ENCODE measurements at regions of chr11 and their contacts with region 1.

Region 1: DNA sequence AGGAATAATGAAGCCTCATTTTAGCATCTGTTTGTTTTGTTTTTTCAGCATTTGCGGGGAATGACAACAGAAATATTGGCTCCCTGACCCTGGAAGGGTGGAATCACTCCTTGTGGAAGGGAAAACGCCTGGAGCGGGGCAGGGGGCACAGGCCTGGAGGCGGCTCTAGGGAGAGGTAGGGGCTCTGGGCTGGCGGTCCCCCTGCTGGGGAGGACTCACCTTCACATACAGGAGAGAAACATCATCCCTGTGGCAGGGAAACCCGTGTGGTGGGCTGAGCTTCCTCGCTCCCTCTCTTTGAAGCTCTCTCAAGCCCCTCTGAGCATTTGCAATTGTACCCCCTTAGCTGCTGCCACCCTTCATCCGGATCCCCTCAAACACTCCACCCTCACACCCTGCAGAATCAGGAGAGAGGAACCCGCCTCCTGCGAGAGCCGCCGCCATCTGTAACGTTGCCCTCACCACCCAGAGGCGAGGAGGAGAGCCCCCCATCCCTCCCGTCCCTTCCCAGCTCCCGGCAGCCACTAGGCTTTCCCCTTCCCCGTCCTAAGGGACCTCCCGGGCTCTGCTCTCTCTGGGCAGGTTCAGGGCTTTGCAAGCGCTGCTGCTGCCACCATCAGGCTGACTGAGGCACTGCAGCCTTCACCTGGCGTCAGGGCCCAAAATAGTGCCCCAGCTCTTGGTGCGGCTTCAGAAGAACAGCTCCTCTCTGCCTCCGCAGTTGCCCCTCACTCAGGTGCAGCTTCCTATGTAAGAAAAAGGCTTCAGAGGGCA is 10.4 kb downstream of the KIRREL3 start:
- DNase-seq: peak; percentile 44 to 87 (median 69)
- H3K4me3 ChIP-seq: no peak overlapping the region
- H3K27ac ChIP-seq: no peak overlapping the region
- H3K4me1 ChIP-seq: no peaks in the 10 kb centered on the region
- H3K27me3 ChIP-seq: peaks cover 12% of the 10 kb centered on the region
- CTCF ChIP-seq: peak; percentile 75 to 94 (median 87)
- POLR2A ChIP-seq: no peak

Region 2: DNA sequence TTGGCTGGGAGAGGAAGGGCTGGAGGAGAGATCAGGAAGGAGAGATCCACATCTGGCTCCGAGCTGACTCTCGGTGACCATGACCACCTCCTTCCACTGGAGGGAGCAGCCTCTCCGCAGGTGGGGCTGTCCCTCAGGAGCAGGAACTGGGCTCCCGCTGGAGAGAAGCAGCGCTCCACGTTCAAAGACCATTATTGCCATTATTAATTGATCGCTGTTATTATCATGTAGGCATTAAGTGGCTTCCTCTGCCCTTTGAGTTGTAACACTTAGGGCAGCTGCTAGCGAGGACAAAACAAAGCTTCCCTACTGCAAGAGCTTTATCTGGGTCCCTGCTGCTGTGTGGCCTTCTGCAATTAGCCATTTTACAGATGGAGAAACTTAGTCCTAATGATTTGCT is 382.8 kb before region 1 on chr11:
- intact Hi-C with region 1: loop called in 1 of 2 experiments (anchors 5 kb)
- DNase-seq: peak; percentile 33 to 83 (median 62)
- H3K4me3 ChIP-seq: no peak overlapping the region
- H3K27ac ChIP-seq: no peak overlapping the region
- H3K4me1 ChIP-seq: no peaks in the 10 kb centered on the region
- H3K27me3 ChIP-seq: no peaks in the 10 kb centered on the region
- CTCF ChIP-seq: peak; percentile 42 to 83 (median 66)
- POLR2A ChIP-seq: no peak

Region 3: GRCh38 chr11:126716456-126717083 is 273.6 kb before region 1 on chr11:
- intact Hi-C with region 1: loop called (anchors 5 to 10 kb)
- DNase-seq: peak; percentile 26 to 79 (median 53)
- H3K4me3 ChIP-seq: no peak overlapping the region
- H3K27ac ChIP-seq: no peak overlapping the region
- H3K4me1 ChIP-seq: no peaks in the 10 kb centered on the region
- H3K27me3 ChIP-seq: no peaks in the 10 kb centered on the region
- CTCF ChIP-seq: peak; percentile 27 to 61 (median 54)
- POLR2A ChIP-seq: no peak